ENCODE measurements at regions of chr12 and their contacts with region 1.

Region 1: DNA sequence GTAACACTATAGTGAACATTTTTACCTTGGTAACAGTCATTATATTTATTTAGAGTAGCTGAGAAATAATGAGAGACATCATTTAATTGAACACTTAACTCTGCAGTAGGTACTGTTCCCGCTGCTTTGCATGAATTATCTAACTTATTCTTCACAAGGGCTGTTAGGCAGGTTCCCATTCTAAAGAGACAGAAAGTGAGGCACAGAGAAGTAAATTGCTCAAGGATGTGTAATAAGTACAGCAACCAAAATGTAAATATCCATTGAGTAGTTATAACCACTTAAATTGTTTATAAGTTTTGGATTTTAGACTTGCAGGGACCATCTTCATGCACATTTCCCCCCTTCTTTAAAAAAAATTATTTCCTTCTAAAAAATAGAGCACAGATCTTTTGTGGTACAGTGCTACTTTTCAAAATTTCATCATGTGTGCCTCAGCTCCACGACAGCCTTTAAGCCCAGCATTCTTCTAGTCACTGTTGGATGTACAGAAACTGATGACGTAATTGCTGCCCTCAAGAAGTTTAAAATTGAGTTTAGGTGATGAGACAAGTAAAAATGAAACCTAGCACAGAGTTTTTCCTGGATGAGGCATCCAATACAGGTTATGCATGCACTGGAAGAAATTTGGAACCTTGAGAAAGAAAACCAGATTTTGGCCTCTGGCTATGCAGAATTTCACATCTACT is 6.0 kb upstream of the MANSC4 start:
- DNase-seq: peak; percentile 93
- ATAC-seq: peak; percentile 65
- H3K4me3 ChIP-seq: no peak overlapping the region
- H3K27ac ChIP-seq: no peak overlapping the region
- H3K4me1 ChIP-seq: peaks cover 20% of the 10 kb centered on the region
- H3K27me3 ChIP-seq: no peaks in the 10 kb centered on the region
- CTCF ChIP-seq: no peak
- POLR2A ChIP-seq: no peak
- RAD21 ChIP-seq: no peak

Region 2: DNA sequence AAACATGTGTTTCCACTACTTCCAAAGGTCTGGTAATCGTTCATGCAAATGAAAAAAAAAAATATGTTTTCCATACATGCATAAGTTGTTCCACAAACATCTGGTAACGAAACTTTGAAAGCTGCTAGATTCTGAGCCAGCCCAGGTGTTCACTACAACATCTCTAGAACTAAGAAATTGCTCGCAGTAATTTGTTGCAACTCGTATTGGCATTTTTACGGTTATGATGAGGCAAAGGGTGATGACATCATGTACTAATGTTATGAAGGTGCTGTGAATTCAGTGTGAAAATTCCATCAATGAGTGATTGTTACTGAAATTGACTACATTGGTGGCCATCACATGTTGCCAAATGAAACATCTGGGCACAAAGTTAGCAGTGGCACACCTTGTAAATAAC is 372.3 kb after region 1 on chr12:
- CTCF ChIA-PET with region 1: no interaction called
- POLR2A ChIA-PET with region 1: interaction called, 16 read pairs
- dilution Hi-C with region 1: no loop called
- in situ Hi-C with region 1: no loop called
- intact Hi-C with region 1: no loop called
- DNase-seq: no peak
- ATAC-seq: no peak
- H3K4me3 ChIP-seq: no peak overlapping the region
- H3K27ac ChIP-seq: no peak overlapping the region
- H3K4me1 ChIP-seq: no peaks in the 10 kb centered on the region
- H3K27me3 ChIP-seq: no peaks in the 10 kb centered on the region
- CTCF ChIP-seq: no peak
- POLR2A ChIP-seq: no peak
- RAD21 ChIP-seq: no peak